ENCODE measurements at regions of chr6 and their contacts with region 1.

Region 1: DNA sequence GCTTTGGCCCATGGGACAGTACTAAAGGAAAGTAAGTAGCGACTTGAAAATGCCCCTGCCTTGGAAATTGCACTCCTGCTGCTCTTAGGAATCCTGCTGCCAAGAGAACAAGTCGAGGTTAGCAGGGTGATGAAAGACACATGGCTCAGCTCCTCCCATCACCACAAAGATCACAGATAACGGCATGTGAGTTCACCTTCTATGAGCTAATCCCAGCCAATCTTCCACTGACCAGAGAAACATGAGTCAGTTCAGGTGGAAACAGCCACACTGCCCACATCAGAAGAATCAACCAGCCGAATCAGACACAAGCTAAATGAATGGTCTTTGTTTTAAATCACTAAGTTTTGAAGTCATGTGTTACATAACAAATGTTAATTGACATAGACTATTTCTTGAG is 106.3 kb downstream of the PRKN start:
- DNase-seq: no peak
- H3K4me3 ChIP-seq: no peak overlapping the region
- H3K27ac ChIP-seq: no peak overlapping the region
- H3K4me1 ChIP-seq: no peaks in the 10 kb centered on the region
- H3K27me3 ChIP-seq: no peaks in the 10 kb centered on the region
- CTCF ChIP-seq: no peak
- POLR2A ChIP-seq: no peak

Region 2: DNA sequence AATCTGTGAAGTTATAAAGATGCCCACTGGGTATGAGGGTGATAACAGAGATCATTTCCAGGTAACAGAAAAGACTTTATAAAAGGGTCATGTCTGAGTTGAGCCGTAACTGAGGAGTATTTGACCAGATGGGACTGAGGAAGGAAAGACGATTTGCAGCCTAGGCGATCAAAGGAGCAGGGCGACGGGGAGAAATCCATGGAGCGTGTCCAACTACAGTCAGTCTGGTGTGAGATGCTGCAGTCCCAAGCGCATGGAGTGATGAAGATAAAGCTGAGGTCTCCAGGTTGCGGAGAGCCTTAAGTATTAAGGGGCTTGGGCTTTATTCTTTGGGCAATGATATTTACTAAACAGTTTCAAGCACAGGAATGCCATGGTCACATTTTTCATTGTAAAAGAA is 60.4 kb before region 1 on chr6:
- intact Hi-C with region 1: no loop called
- DNase-seq: no peak
- H3K4me3 ChIP-seq: no peak overlapping the region
- H3K27ac ChIP-seq: no peak overlapping the region
- H3K4me1 ChIP-seq: no peaks in the 10 kb centered on the region
- H3K27me3 ChIP-seq: no peaks in the 10 kb centered on the region
- CTCF ChIP-seq: no peak
- POLR2A ChIP-seq: no peak

Region 3: DNA sequence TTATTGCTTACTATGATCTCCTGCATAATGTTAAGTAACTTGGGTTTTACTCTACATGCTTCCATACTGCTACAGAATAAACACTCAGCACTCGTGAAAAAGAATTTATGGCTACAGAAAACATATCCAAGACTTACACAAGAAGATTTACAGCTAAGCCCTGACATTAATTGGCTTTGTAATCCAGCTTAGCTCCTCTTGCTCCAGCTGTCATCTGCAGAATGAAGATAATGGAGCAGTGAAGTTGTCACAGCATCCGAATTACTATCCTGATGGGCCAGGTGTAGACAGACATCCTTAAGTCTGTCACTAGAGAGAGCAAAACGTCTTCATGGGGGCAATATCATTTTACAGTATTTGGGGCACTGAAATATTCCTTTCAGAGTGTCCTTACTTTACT is 49.0 kb before region 1 on chr6:
- intact Hi-C with region 1: no loop called
- DNase-seq: no peak
- H3K4me3 ChIP-seq: no peak overlapping the region
- H3K27ac ChIP-seq: no peak overlapping the region
- H3K4me1 ChIP-seq: no peaks in the 10 kb centered on the region
- H3K27me3 ChIP-seq: no peaks in the 10 kb centered on the region
- CTCF ChIP-seq: no peak
- POLR2A ChIP-seq: no peak

Region 4: DNA sequence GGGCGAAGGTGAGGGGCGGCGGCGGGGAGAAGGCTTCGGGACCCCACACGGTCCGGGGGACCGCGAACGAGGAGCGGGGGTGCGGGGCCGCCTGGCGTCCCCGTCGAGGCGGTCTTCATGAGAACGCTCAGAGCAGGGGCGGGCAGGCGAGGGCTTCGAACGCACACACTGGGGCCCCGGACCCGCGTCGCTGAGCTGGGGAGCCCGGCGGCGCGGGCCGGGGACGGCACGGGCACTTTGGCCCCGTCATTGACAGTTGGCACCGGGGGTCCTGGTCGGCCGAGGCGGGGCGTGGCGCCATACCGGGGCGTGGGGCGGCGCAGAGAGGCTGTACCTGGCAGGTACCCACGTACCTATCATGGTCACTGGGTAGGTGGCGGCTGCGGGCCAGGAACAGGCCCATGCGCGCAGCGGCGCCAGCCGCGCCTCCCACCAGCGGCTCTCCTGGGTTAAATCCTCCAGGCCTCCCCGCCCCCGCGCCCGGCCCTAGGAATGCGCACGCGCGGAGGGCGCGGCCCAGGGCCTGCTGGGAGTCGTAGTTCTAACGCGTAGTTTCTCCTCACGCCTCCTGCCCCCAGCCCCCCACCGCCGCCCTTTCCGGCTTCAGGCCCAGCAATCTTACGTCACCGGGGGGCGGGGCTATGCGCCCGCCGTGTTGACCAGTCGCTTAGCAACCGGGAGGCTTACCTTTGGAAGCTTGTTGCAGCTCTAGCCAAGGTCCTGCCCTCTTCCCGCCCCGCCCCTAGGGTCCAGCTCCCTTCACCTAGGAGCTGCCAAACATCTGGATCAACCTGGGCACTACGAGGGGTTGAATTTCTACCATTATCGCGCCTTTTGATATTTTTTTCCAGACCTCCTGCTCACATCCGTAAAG is 106.3 kb after region 1 on chr6 and contains the starts of genes PACRG and PRKN:
- intact Hi-C with region 1: loop called (anchors 10 kb)
- DNase-seq: peak; percentile 98
- H3K4me3 ChIP-seq: peak within 1 kb of the TSS; percentile 75 to 88
- H3K27ac ChIP-seq: peak within 1 kb of the TSS; percentile 78 to 81
- H3K4me1 ChIP-seq: no peaks in the 10 kb centered on the region
- H3K27me3 ChIP-seq: no peaks in the 10 kb centered on the region
- CTCF ChIP-seq: no peak
- POLR2A ChIP-seq: peak; percentile 97
- total RNA-seq, gene PACRG: 2.9 to 63.8 TPM
- total RNA-seq, gene PRKN: 10.7 to 21.2 TPM

Measured in prostate gland (tissue), 2 donors.